Activated CD4-positive, alpha-beta T cell treated with anti-CD3 and anti-CD28 coated beads, Interleukin-2, amount 10 ng/mL, durations not matched to agents 24 days and 14 days (primary cell): ENCODE measurements at regions of chr16 and their contacts with region 1.

Region 1: GRCh38 chr16:17013038-17013437 is 457.7 kb downstream of the XYLT1 start:
- DNase-seq: no peak
- H3K4me3 Mint-ChIP-seq: peak overlapping the region; percentile 79
- H3K27ac Mint-ChIP-seq: peak overlapping the region; percentile 72
- H3K4me1 Mint-ChIP-seq: peaks cover 11% of the 10 kb centered on the region
- H3K27me3 Mint-ChIP-seq: peaks cover 8% of the 10 kb centered on the region

Region 2: DNA sequence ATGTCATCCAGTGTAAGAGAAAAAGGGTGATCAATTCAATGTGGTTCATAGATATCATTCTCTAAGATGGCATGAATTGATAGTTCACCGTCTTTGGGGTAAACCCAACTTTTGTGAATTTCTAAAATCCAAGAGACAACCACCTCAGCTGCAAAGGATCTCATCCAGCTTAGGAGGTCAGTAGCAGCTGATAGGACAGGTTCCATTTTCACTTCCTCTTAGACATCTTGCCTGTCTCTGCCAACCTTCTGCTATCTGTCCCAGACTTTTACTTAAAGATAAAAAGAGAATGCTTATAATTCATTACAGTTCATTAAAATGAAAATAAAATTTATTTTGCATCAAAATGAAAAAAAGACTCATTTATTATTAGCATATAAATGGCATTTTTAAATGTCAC is 10.5 kb before region 1 on chr16:
- intact Hi-C with region 1: no loop called
- DNase-seq: no peak
- H3K4me3 Mint-ChIP-seq: no peak overlapping the region
- H3K27ac Mint-ChIP-seq: no peak overlapping the region
- H3K4me1 Mint-ChIP-seq: no peaks in the 10 kb centered on the region
- H3K27me3 Mint-ChIP-seq: peaks cover 8% of the 10 kb centered on the region

Region 3: GRCh38 chr16:17026600-17027242 is 13.7 kb after region 1 on chr16:
- intact Hi-C with region 1: loop called (anchors 1 kb)
- DNase-seq: peak; percentile 73
- H3K4me3 Mint-ChIP-seq: peak overlapping the region; percentile 4
- H3K27ac Mint-ChIP-seq: peak overlapping the region; percentile 73
- H3K4me1 Mint-ChIP-seq: peaks cover 22% of the 10 kb centered on the region
- H3K27me3 Mint-ChIP-seq: no peaks in the 10 kb centered on the region

Region 4: GRCh38 chr16:17238284-17239028 is 225.4 kb after region 1 on chr16:
- intact Hi-C with region 1: no loop called
- DNase-seq: peak; percentile 67
- H3K4me3 Mint-ChIP-seq: peak overlapping the region; percentile 7
- H3K27ac Mint-ChIP-seq: peak overlapping the region; percentile 74
- H3K4me1 Mint-ChIP-seq: peaks cover 29% of the 10 kb centered on the region
- H3K27me3 Mint-ChIP-seq: no peaks in the 10 kb centered on the region